Right ventricle myocardium inferior (tissue), 1 donor: ENCODE measurements at regions of chr10 and their contacts with region 1.

Region 1: GRCh38 chr10:72061491-72061890 is 26.9 kb downstream of the SPOCK2 start:
- DNase-seq: no peak
- ATAC-seq: no peak

Region 2: DNA sequence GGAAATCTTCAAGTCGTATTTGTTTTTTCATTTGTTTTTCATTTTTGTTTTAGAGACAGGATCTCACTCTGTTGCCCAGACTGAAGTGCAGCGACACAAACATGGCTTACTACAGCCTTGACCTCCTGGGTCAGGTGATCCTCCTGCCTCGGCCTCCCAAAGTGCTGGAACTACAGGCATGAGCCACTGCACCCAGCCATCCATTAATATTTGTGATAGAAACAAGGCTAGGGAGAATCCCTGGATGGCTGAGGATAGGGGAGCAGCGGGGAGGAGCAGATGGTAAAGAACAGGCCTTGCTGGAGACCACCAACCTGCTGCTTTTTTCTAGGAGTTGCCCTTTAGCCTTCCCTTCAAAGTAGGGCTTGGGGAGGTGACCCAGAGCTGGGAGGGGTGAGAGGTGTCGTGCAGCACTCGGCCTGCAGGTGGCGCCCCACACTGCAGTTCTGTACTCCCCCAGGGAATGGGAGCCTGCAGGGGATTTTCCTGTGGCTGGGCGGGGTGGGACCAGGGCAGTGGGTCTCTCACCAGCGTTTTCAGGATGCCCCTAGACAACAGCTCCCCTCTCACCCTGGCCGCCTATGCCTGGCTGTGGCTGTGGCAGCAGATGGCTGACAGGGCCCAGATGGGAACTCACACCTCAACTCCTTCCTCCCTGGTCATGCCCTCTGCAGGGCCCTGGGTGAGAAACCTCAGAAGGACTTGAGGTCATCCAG is 677.4 kb before region 1 on chr10:
- intact Hi-C with region 1: loop called (anchors 10 kb)
- DNase-seq: peak; percentile 86
- ATAC-seq: peak; percentile 87

Region 3: GRCh38 chr10:71835671-71836595 is 225.6 kb before region 1 on chr10:
- intact Hi-C with region 1: no loop called
- DNase-seq: peak; percentile 80
- ATAC-seq: peak; percentile 58

Region 4: GRCh38 chr10:71975087-71975890 is 86.2 kb before region 1 on chr10:
- intact Hi-C with region 1: no loop called
- DNase-seq: no peak
- ATAC-seq: peak; percentile 67

Region 5: GRCh38 chr10:71985542-71986250 is 75.8 kb before region 1 on chr10:
- intact Hi-C with region 1: no loop called
- DNase-seq: peak; percentile 86
- ATAC-seq: peak; percentile 69

Region 6: DNA sequence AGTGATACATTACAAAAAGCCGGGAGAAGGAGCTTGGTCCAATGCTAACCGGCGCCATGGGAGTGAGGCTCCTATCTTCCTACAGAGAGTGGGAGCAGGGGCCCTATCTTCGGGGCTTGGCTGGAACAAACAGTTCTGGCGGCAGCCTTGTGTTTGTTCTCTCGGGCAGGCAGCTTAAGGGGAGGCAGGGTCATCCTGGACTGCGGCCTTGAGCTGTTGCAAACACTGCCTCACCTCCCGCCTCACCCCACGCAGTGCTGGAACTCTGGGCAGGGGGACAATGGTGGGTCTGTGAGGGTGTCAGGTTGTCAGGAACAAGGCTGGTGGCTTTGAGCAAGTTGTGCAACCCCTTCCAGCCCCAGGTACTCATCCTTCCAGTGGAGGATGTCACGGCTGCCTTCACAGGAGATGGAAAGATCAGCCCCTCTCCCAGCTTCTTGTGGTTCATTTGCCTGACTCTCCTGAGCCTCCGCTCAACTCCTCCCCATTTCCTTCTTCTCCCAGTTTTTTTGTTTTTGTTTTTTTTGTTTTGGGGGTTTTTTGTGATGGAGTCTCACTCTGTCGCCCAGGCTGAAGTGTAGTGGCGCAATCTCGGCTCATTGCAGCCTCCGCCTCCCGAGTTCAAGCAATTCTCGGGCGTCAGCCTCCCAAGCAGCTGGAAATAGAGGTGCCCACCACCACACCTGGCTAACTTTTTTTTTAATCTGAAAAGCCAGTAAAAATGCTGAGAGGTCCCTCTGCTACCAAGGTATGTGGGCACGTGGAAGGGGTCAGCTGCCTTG is 30.5 kb before region 1 on chr10:
- intact Hi-C with region 1: no loop called
- DNase-seq: peak; percentile 86
- ATAC-seq: peak; percentile 93

Region 7: GRCh38 chr10:72097448-72098300 is 36.2 kb after region 1 on chr10:
- intact Hi-C with region 1: loop called (anchors 5 kb)
- DNase-seq: no peak
- ATAC-seq: peak; percentile 89